ENCODE measurements at regions of chr1 and their contacts with region 1.

Region 1: DNA sequence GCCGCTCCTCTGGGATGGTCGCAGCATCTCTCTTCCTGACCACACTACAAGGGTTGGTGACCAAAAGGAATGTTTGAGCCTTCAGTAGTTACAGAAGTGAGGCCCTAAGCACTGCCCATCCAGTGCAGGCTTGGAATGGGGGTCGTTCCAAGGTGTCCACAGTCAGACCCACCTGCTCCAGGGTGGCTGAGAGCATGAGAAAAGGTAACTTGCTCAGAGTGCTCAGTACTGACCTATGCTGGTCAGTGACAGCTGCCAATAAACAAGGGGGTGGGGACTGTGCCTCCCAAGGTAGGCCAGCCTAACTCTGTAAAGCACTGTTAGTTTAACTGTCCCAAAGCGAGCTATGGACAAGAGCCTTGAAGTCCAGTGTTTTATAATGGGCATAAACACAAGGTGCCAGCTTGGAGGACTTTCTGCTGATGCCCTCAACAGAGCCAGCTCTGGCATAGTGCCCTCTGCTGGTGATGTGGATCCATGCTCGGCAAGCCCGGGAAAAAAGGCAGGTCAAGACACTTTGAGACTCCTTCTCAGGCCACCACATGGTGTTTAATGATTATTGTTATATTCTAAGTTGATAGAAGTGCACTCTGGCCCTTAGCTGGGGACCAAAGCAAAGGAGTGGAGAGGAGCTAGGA is 78.1 kb upstream of the DNAH14 start:
- DNase-seq: peak in 7 of 10 donors; percentile 50 to 89 (median 66)

Region 2: DNA sequence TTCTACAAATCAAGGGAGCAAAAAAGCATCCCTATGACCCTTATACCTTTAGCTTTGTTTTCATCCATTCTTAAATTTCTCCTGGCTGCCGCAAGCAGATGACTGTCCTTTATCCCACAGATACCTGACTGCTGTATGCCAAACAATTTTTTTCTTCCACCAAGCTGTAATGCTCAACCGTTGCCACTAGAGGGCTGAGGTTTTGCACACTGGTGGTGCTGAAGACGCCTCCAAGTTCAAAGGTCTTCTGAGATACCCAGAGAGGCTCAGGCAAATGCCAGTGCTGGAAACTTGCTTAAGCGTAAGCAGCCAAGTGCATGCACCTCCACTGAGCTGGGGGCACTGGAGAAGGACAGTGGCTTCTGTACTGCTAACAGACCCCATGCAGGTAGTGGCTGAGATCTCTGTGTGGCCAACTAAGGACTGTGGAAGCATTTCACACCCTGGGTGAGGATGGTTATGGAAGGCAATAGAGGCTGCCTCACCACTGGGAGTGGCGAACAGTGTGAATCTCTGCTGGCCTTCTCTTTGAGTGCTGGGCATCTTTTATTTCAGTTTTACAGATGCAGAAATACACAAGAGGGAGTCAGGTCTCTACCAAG is 206.7 kb before region 1 on chr1:
- intact Hi-C with region 1: loop called (anchors 5 kb)
- DNase-seq: peak in 5 of 10 donors; percentile 39 to 80 (median 48)

Measured in posterior cingulate gyrus (tissue), 11 donors.